ENCODE measurements at regions of chr17 and their contacts with region 1.

Region 1: GRCh38 chr17:15966183-15966878 is 21.4 kb downstream of the ADORA2B start:
- DNase-seq: peak in 1 of 2 experiments; percentile 72
- H3K4me3 ChIP-seq: peak overlapping the region; percentile 0 to 51 (median 20); a peak in 6 of 8 replicates
- H3K27ac ChIP-seq: peak overlapping the region; percentile 89; the same call in 1 of the 2 replicates
- H3K4me1 ChIP-seq: peaks cover 12 to 34% (median 23%) of the 10 kb centered on the region in 4 experiments
- H3K27me3 ChIP-seq: 0 out of 7 replicates have a peak, but pooled peaks cover 0 to 2% (median 0%) of the 10 kb centered on the region in 4 experiments
- CTCF ChIP-seq: no peak
- EP300 ChIP-seq: peak in 1 of 2 experiments; percentile 67; a peak in 1 of 3 replicates
- POLR2A ChIP-seq: peak in 1 of 2 experiments; percentile 45; a peak in 1 of 3 replicates
- RAD21 ChIP-seq: 0 out of 4 replicates have a peak, but pooled peaks have one; percentile 2 to 8

Region 2: DNA sequence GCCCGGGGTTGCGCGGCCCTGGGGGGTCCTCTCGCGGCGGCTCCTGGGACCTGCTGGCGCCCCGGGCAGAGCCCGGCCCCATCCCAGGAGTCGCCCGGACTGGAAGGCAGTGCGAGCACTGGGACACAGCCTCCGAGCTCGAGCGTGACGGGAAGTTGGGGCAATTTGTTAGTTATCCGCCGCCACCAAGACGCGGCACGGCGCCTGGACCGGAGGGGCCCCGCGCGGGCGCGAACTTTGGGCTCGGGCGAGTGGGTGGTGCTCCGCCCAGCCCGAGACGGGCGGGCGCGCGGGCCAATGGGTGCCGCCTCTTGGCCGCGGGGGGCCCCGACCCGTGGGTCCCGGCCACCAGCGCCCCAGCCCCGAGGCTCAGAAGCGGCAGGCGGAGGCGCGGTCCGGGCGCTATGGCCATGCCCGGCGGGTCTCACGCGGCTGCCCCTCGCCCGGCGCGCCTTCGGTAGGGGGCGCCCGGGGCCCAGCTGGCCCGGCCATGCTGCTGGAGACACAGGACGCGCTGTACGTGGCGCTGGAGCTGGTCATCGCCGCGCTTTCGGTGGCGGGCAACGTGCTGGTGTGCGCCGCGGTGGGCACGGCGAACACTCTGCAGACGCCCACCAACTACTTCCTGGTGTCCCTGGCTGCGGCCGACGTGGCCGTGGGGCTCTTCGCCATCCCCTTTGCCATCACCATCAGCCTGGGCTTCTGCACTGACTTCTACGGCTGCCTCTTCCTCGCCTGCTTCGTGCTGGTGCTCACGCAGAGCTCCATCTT is 21.4 kb before region 1 on chr17 and contains the start of gene ADORA2B:
- CTCF ChIA-PET with region 1: interaction called, 24 read pairs
- POLR2A ChIA-PET with region 1: interaction called, 25 read pairs
- DNase-seq: peak in 1 of 2 experiments; percentile 86
- H3K4me3 ChIP-seq: peak within 1 kb of the TSS; percentile 35 to 66 (median 62)
- H3K27ac ChIP-seq: no peak within 1 kb of the TSS
- H3K4me1 ChIP-seq: peaks cover 5 to 17% (median 5%) of the 10 kb centered on the region in 4 experiments; a peak in 6 of 7 replicates
- H3K27me3 ChIP-seq: peaks cover 10 to 41% (median 35%) of the 10 kb centered on the region in 4 experiments
- CTCF ChIP-seq: peak; percentile 57 to 70 (median 67)
- EP300 ChIP-seq: no peak
- POLR2A ChIP-seq: peak in 1 of 2 experiments; percentile 35; a peak in 1 of 3 replicates
- RAD21 ChIP-seq: peak; percentile 58 to 72
- total RNA-seq, gene ADORA2B: 2.6 and 3.3 TPM in 2 replicates

Region 3: DNA sequence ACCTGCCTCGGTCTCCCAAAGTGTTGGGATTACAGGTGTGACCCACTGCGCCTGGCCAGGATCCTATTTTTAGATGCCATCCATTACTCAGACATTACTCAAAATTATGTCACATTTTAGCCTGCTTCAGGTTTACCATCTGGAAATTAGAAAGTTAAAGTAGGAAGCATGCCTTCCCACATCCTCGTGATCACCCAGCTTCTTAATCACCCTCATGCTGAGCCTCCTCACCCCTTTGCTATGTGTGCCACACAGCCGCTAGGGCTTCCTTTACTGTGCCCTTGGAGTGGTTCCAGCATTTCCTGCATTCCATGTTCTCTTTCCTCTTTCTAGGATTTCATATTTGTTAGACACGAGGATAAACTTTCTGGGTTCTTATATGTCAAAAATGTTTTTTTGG is 12.1 kb before region 1 on chr17:
- CTCF ChIA-PET with region 1: interaction called, 4 read pairs
- POLR2A ChIA-PET with region 1: interaction called, 25 read pairs
- DNase-seq: no peak
- H3K4me3 ChIP-seq: no peak overlapping the region
- H3K27ac ChIP-seq: no peak overlapping the region
- H3K4me1 ChIP-seq: peaks cover 0 to 6% (median 3%) of the 10 kb centered on the region in 4 experiments; a peak in 4 of 7 replicates
- H3K27me3 ChIP-seq: no peaks in the 10 kb centered on the region
- CTCF ChIP-seq: no peak
- EP300 ChIP-seq: no peak
- POLR2A ChIP-seq: no peak
- RAD21 ChIP-seq: no peak

Region 4: DNA sequence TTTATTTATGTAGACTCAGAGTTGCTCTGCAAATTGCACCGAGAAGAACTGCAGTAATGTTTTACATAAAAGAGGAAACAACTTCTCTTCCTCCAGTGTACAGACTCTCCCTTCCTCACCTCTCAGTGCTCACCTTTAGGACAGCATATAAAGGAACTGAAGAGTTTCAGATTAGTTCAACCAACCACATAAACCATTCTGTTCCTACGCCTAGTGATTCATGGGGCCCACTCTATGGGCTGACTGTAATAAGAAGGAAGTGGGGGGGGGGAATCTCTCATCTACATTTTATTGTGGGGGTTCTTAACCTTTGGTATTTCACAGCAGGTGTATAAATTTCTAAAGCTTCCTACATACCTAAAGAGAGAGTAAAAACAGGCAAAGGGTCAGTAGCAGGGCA is 14.9 kb after region 1 on chr17:
- CTCF ChIA-PET with region 1: interaction called, 7 read pairs
- POLR2A ChIA-PET with region 1: interaction called, 19 read pairs
- DNase-seq: no peak
- H3K4me3 ChIP-seq: no peak overlapping the region
- H3K27ac ChIP-seq: no peak overlapping the region
- H3K4me1 ChIP-seq: no peaks in the 10 kb centered on the region
- H3K27me3 ChIP-seq: no peaks in the 10 kb centered on the region
- CTCF ChIP-seq: no peak
- EP300 ChIP-seq: no peak
- POLR2A ChIP-seq: no peak
- RAD21 ChIP-seq: no peak

Region 5: DNA sequence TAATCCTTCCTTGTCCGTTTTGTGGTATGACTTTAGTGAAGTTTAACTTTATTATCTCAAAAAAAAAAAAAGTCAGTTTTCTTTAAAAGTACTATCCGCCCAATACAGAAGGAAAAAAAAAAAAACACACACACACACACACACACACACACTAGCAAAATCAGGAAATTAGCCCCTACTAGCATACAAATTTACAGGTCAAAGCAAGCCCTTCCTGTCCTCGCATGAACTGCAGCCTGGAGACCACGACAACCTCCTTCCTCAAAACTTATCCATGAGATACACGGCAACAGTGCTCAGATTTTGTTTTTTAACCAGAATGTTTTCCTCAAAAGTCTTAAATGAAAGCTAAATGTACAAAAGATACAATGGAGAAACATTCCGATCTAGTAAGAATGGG is 232.8 kb after region 1 on chr17:
- CTCF ChIA-PET with region 1: no interaction called
- POLR2A ChIA-PET with region 1: no interaction called
- DNase-seq: no peak
- H3K4me3 ChIP-seq: peak overlapping the region in 1 of 4 experiments; percentile 43; a peak in 2 of 8 replicates
- H3K27ac ChIP-seq: no peak overlapping the region; the same call in 1 of the 2 replicates
- H3K4me1 ChIP-seq: peaks cover 0 to 4% (median 3%) of the 10 kb centered on the region in 4 experiments; a peak in 4 of 7 replicates
- H3K27me3 ChIP-seq: no peaks in the 10 kb centered on the region
- CTCF ChIP-seq: no peak
- EP300 ChIP-seq: no peak
- POLR2A ChIP-seq: no peak
- RAD21 ChIP-seq: no peak